Right cardiac atrium (tissue), 5 donors: ENCODE measurements at regions of chr1 and their contacts with region 1.

Region 1: GRCh38 chr1:94854458-94855306 is 34.5 kb downstream of the SLC44A3 start:
- DNase-seq: peak; percentile 87 to 94 (median 90)
- ATAC-seq: peak; percentile 94
- H3K4me3 ChIP-seq: peak overlapping the region; percentile 30
- H3K27ac ChIP-seq: peak overlapping the region; percentile 34
- H3K4me1 ChIP-seq: peaks cover 13% of the 10 kb centered on the region
- H3K27me3 ChIP-seq: no peaks in the 10 kb centered on the region

Region 2: GRCh38 chr1:94658221-94658620 is 196.5 kb before region 1 on chr1:
- intact Hi-C with region 1: no loop called
- DNase-seq: peak in 2 of 3 donors; percentile 65 to 70
- ATAC-seq: peak; percentile 95 to 96
- H3K4me3 ChIP-seq: no peak overlapping the region
- H3K27ac ChIP-seq: peak overlapping the region; percentile 42
- H3K4me1 ChIP-seq: peaks cover 5% of the 10 kb centered on the region
- H3K27me3 ChIP-seq: no peaks in the 10 kb centered on the region

Region 3: GRCh38 chr1:94805912-94806311 is 48.8 kb before region 1 on chr1:
- intact Hi-C with region 1: no loop called
- DNase-seq: peak; percentile 37 to 72 (median 63)
- ATAC-seq: peak in 1 of 2 donors; percentile 49
- H3K4me3 ChIP-seq: no peak overlapping the region
- H3K27ac ChIP-seq: no peak overlapping the region
- H3K4me1 ChIP-seq: peaks cover 7% of the 10 kb centered on the region
- H3K27me3 ChIP-seq: no peaks in the 10 kb centered on the region

Region 4: GRCh38 chr1:95043141-95043980 is 188.7 kb after region 1 on chr1:
- intact Hi-C with region 1: loop called (anchors 1 to 5 kb)
- DNase-seq: peak; percentile 81 to 91 (median 87)
- ATAC-seq: peak; percentile 86 to 87
- H3K4me3 ChIP-seq: no peak overlapping the region
- H3K27ac ChIP-seq: peak overlapping the region; percentile 30
- H3K4me1 ChIP-seq: peaks cover 4% of the 10 kb centered on the region
- H3K27me3 ChIP-seq: no peaks in the 10 kb centered on the region